ENCODE measurements at regions of chr3 and their contacts with region 1.

Region 1: DNA sequence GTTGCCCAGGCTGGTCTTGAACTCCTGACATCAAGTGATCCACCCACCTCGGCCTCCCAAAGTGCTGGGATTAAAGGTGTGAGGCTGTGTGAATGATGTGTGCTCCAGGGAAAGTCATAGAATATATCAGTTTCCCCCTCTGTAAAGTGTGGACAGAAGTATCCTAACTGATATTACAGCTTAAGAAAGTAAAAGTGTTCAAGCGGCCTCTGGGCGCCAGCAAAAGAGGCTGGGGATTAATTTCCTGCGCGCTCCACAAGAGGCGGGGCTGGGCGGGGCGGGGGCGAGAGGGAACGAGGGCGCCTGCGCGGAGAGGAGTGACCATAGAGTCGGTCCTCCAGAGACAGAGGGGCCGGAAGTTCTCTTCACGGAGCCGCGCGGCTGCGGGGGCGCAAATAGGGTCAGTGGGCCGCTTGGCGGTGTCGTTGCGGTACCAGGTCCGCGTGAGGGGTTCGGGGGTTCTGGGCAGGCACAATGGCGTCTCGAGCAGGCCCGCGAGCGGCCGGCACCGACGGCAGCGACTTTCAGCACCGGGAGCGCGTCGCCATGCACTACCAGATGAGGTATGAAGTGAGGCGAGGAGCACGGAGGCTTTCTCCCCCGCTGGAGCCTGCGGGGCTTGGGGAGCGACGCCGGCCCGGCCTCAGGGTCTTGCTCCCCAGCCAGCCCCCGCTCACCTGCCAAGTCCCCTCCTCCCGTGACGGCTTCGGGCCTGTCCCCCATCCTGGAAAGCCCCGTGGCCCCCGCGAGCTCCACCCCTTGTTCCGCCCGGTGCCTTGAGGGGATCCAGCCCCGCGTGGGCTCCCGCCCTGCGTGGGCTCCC is at the start of gene JAGN1:
- DNase-seq: peak; percentile 86 to 94 (median 91)
- ATAC-seq: peak; percentile 92
- H3K4me3 ChIP-seq: peak within 1 kb of the TSS; percentile 95 to 96
- H3K4me3 Mint-ChIP-seq: peak within 1 kb of the TSS; percentile 98
- H3K27ac ChIP-seq: peak within 1 kb of the TSS; percentile 99 to 100
- H3K27ac Mint-ChIP-seq: peak within 1 kb of the TSS; percentile 100
- H3K4me1 ChIP-seq: peaks cover 16% of the 10 kb centered on the region
- H3K4me1 Mint-ChIP-seq: peaks cover 40% of the 10 kb centered on the region
- H3K27me3 ChIP-seq: no peaks in the 10 kb centered on the region
- H3K27me3 Mint-ChIP-seq: no peaks in the 10 kb centered on the region
- CTCF ChIP-seq: no peak
- total RNA-seq, gene JAGN1: 13.4 to 14.5 TPM

Region 2: DNA sequence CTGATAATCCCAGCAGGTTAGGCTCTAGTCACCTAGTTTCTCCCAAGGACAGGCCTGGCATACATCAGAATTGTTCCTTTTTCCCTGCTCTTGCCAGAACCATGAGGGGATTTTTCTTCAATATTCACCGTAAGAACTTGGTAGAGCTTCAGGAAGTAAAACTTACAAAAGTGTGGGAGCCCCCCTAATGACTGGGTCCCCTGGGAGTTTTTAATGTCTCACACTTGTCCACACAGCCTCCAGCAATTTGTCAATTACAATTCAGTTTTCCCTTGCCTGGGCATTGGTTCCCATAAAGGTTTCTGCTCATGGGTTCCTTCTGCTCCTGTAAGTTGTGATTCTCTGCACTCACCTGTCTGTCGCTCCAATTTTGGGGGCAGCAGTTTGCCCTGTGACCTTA is 365.4 kb before region 1 on chr3:
- CTCF ChIA-PET with region 1: no interaction called
- POLR2A ChIA-PET with region 1: no interaction called
- intact Hi-C with region 1: no loop called
- DNase-seq: no peak
- ATAC-seq: no peak
- H3K4me3 ChIP-seq: no peak overlapping the region
- H3K4me3 Mint-ChIP-seq: no peak overlapping the region
- H3K27ac ChIP-seq: no peak overlapping the region
- H3K27ac Mint-ChIP-seq: no peak overlapping the region
- H3K4me1 ChIP-seq: no peaks in the 10 kb centered on the region
- H3K4me1 Mint-ChIP-seq: no peaks in the 10 kb centered on the region
- H3K27me3 ChIP-seq: peaks cover 0 to 3% of the 10 kb centered on the region in 2 experiments
- H3K27me3 Mint-ChIP-seq: peaks cover 37% of the 10 kb centered on the region
- CTCF ChIP-seq: no peak

Region 3: DNA sequence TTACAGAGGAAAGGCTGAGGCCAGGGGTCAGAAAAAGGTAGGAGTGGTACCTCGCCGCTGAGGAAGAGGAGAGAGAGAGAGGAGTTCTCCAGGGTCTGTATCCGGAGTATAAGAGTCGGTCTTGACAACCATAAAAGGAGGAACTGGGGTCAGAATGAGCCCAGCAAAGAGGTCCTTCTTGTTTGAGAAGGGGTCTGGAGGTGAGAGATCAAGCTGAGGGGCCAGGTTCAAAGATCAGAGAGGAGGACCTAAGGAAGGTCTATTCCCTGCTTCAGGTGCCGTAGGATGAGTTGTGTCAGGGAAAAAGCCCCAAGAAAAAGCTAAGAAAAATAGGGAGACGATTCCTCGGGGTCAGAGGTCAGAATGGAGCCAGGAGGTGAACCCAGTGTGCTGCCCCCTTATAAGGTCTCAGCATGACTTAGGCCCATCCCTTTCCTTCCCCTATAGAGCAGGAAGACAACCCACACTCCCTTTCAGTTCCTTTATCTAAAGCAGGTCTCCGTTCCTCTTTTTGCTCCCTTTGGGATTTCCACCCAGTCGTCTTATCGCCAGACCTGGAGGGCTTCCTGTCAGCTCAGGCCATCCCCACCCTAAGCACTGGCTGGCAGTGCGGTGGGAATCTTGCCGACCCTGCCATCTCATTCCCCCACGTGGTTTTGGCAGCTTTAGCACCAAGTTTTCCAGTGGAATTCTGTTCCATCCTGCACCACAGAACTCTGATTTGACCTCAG is 240.5 kb before region 1 on chr3:
- CTCF ChIA-PET with region 1: no interaction called
- POLR2A ChIA-PET with region 1: interaction called, 4 read pairs
- intact Hi-C with region 1: loop called (anchors 2 to 5 kb)
- DNase-seq: peak in 2 of 9 experiments; percentile 10 to 42
- ATAC-seq: no peak
- H3K4me3 ChIP-seq: peak overlapping the region; percentile 90 to 91
- H3K4me3 Mint-ChIP-seq: peak overlapping the region; percentile 93
- H3K27ac ChIP-seq: peak overlapping the region; percentile 88 to 94
- H3K27ac Mint-ChIP-seq: peak overlapping the region; percentile 97
- H3K4me1 ChIP-seq: peaks cover 27% of the 10 kb centered on the region
- H3K4me1 Mint-ChIP-seq: peaks cover 39% of the 10 kb centered on the region
- H3K27me3 ChIP-seq: no peaks in the 10 kb centered on the region
- H3K27me3 Mint-ChIP-seq: no peaks in the 10 kb centered on the region
- CTCF ChIP-seq: no peak

Region 4: GRCh38 chr3:9792405-9793160 is 97.9 kb before region 1 on chr3 and contains the starts of genes ARPC4 and TADA3:
- CTCF ChIA-PET with region 1: no interaction called
- POLR2A ChIA-PET with region 1: interaction called, 5 read pairs
- intact Hi-C with region 1: loop called (anchors 1 kb)
- DNase-seq: peak; percentile 82 to 97 (median 92)
- ATAC-seq: peak; percentile 83
- H3K4me3 ChIP-seq: peak within 1 kb of the TSS; percentile 76 to 96
- H3K4me3 Mint-ChIP-seq: peak within 1 kb of the TSS; percentile 94
- H3K27ac ChIP-seq: peak within 1 kb of the TSS; percentile 93 to 98
- H3K27ac Mint-ChIP-seq: peak within 1 kb of the TSS; percentile 98
- H3K4me1 ChIP-seq: peaks cover 48% of the 10 kb centered on the region
- H3K4me1 Mint-ChIP-seq: peaks cover 58% of the 10 kb centered on the region
- H3K27me3 ChIP-seq: no peaks in the 10 kb centered on the region
- H3K27me3 Mint-ChIP-seq: no peaks in the 10 kb centered on the region
- CTCF ChIP-seq: no peak
- total RNA-seq, gene ARPC4: 97.7 to 104 TPM
- total RNA-seq, gene TADA3: 9.5 to 11.0 TPM

Region 5: DNA sequence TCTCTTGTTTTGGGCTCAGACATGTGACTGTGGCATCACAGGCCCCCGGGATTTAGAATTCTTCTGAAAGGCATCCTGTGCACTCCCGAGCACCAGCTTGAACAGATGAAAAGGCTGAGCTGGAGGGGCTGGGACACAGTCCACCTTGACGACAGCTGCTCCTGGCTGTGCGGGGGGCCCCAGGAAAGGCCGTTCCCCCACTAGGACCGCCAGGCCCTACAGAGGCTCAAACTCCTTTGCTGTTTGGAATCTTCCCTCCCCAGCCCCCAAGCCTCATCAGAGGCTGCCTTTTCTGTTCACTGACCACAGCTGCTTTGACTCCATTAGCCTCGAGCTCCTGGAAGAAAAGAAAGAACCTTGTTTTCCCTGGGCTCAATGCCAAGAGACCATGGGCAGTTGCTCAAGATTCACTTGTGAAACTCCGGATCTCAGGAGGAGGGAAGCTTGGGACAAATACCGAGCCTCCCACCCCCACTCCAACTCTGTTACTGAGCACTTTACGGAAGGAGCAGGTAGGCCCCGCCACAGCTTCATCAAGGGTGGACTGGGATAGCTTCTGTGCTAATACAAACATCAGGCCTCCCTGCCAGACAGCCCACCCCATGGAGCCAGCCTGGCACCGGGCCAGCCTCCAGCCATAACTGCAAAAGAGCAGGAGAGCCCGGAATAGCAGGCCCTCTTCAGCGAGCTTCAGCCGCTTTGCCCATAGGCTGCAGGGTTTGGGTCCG is 26.1 kb before region 1 on chr3:
- CTCF ChIA-PET with region 1: no interaction called
- POLR2A ChIA-PET with region 1: no interaction called
- intact Hi-C with region 1: no loop called
- DNase-seq: no peak
- ATAC-seq: no peak
- H3K4me3 ChIP-seq: no peak overlapping the region
- H3K4me3 Mint-ChIP-seq: no peak overlapping the region
- H3K27ac ChIP-seq: no peak overlapping the region
- H3K27ac Mint-ChIP-seq: no peak overlapping the region
- H3K4me1 ChIP-seq: no peaks in the 10 kb centered on the region
- H3K4me1 Mint-ChIP-seq: peaks cover 4% of the 10 kb centered on the region
- H3K27me3 ChIP-seq: peaks cover 0 to 8% of the 10 kb centered on the region in 2 experiments
- H3K27me3 Mint-ChIP-seq: peaks cover 10% of the 10 kb centered on the region
- CTCF ChIP-seq: no peak

Region 6: DNA sequence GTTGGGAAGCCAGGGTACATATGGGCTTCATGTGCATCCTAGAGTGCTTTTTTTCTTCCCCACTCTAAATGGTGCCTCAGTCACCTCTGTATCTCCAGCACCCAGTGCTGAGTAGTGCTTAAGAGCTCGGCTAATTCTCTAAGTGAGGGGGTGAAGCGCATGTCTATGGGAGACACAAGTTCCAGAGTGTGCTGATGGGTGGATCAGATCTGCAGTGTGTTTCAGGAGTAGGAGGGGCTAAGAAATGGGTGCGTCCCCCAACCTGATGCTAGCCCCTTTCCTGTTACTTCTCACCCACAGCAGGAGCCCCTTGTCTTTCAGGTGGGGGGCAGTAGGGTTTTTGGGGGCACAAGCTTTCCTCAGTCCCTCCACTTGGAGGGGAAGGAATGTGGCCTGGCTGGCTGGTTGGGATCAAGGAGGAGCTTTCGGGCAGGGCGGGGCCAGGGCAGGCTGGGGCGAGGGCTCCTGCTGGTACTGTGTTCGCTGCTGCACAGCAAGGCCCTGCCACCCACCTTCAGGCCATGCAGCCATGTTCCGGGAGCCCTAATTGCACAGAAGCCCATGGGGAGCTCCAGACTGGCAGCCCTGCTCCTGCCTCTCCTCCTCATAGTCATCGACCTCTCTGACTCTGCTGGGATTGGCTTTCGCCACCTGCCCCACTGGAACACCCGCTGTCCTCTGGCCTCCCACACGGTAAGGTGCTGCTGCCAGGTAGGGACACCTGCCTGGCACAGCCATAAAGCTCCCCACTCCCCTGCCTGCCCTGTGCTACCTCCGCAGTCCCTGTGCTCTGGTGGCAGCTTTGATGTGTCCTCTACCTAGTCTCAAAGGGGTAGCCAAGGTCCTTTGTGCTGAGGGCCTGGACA is 12.1 kb after region 1 on chr3 and contains the start of gene IL17RE:
- CTCF ChIA-PET with region 1: interaction called, 3 read pairs
- POLR2A ChIA-PET with region 1: interaction called, 5 read pairs
- intact Hi-C with region 1: loop called in 1 of 2 experiments (anchors 1 kb)
- DNase-seq: peak in 2 of 9 experiments; percentile 21 to 24
- ATAC-seq: peak; percentile 84
- H3K4me3 ChIP-seq: no peak within 1 kb of the TSS
- H3K4me3 Mint-ChIP-seq: peak within 1 kb of the TSS; percentile 66
- H3K27ac ChIP-seq: peak within 1 kb of the TSS in 1 of 2 experiments; percentile 6
- H3K27ac Mint-ChIP-seq: peak within 1 kb of the TSS; percentile 66
- H3K4me1 ChIP-seq: peaks cover 23% of the 10 kb centered on the region
- H3K4me1 Mint-ChIP-seq: peaks cover 24% of the 10 kb centered on the region
- H3K27me3 ChIP-seq: no peaks in the 10 kb centered on the region
- H3K27me3 Mint-ChIP-seq: no peaks in the 10 kb centered on the region
- CTCF ChIP-seq: no peak
- total RNA-seq, gene IL17RE: 2.5 to 3.1 TPM

Region 7: GRCh38 chr3:10142707-10143566 is 252.5 kb after region 1 on chr3:
- CTCF ChIA-PET with region 1: no interaction called
- POLR2A ChIA-PET with region 1: no interaction called
- intact Hi-C with region 1: loop called in 1 of 2 experiments (anchors 1 kb)
- DNase-seq: peak in 3 of 9 experiments; percentile 22 to 51 (median 33)
- ATAC-seq: no peak
- H3K4me3 ChIP-seq: peak overlapping the region; percentile 73 to 74
- H3K4me3 Mint-ChIP-seq: peak overlapping the region; percentile 93
- H3K27ac ChIP-seq: peak overlapping the region in 1 of 2 experiments; percentile 54
- H3K27ac Mint-ChIP-seq: peak overlapping the region; percentile 98
- H3K4me1 ChIP-seq: peaks cover 32% of the 10 kb centered on the region
- H3K4me1 Mint-ChIP-seq: peaks cover 32% of the 10 kb centered on the region
- H3K27me3 ChIP-seq: no peaks in the 10 kb centered on the region
- H3K27me3 Mint-ChIP-seq: no peaks in the 10 kb centered on the region
- CTCF ChIP-seq: no peak

Measured in CD8-positive, alpha-beta T cell (primary cell).